RWPE1 (cell line): ENCODE measurements at regions of chr2 and their contacts with region 1.

Region 1: GRCh38 chr2:238370823-238371372 is 50.6 kb downstream of the TRAF3IP1 start:
- DNase-seq: peak; percentile 75
- H3K27ac ChIP-seq: no peak overlapping the region
- CTCF ChIP-seq: peak; percentile 78

Region 2: DNA sequence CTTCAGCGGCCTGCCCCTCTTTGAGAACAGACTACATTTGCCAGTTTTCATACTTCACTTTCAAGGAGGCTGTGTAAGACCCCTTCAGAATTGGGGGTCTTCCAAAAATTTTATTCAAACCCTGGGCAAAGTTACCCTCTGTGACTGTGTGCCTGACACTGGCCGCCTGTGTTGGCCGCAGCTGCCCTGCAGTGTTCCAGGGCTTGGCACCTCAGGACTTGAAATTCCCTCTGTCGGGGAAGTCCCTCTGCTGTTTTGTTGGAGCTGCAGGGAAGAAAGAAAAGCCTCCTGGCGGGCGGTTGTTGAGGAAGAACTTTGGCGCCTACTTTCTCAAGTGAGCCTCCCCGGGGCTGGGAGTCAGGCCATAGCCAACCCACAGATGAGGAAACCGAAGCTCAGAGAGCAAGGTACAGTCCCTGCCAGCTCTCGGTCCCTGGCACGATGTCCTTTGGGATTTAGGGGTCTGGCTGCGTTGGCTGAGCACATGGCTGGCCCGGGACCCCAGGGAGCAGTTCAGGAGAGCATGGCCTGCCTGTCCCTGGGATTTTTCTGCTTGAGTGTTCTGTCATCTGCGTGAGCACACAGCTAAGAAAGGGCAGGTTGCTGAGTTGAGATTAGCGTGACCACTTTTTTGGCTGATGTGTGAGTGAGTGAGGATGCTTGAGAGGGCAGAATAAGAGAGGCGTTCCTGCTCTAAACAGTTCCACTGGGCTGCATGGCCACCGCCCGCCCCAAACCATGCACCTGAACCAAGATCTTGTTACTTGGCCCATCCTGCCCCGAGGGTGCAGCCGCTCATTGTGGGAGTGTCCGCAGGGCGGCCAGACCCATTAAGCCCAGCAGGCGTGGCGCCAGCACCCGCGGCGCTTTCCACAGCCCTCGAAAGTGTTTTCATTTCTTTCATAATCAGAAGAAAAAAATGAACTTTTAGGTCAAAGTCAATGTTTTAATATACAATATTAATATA is 38.0 kb after region 1 on chr2:
- CTCF ChIA-PET with region 1: no interaction called
- POLR2A ChIA-PET with region 1: no interaction called
- DNase-seq: no peak
- H3K27ac ChIP-seq: no peak overlapping the region
- CTCF ChIP-seq: no peak

Region 3: DNA sequence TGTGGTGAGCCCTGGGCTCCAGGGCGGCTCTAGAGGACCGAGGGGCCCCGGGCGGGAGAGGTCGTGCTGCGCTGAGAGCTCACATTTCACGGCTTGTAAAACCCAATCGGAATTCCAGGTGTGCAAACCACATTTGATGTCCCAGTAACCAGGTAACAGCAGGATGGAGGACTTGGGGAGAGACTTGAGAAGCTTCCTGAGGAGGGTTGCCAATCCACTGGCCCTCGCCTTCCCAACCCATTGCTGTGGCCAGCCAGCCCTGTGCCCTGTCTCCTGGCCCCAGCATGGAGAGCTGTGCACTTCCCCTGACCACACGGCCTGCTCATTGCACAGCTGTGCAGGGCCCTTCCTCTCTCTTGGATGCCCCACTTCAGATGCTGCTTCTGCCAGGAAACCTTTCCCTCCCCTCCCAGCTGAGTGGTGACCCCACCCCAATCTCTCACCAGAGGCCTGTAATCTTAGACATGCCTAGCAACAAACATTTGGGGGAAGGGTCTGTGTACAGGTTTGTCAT is 95.4 kb after region 1 on chr2:
- CTCF ChIA-PET with region 1: interaction called, 10 read pairs
- POLR2A ChIA-PET with region 1: no interaction called
- DNase-seq: no peak
- H3K27ac ChIP-seq: no peak overlapping the region
- CTCF ChIP-seq: no peak

Region 4: DNA sequence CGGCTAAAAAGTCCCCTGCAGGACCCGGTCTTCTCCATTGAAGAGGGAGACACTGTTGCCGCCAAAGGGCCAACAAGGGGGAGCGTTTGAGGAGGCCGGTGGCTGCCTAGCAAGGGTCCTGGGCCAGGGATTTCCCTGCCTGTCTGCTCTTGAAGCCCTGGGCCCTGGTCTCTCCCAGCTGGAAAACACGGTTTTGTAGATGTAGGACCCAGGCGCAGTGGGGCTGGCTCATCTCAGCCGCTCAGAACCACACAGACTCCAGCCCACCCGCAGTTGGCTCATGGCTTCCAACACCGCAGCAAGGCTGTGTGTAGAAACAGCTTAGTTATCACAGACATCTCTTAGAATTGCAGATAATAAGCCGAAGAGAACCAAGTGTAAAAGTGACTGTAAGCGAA is 419.9 kb after region 1 on chr2:
- CTCF ChIA-PET with region 1: no interaction called
- POLR2A ChIA-PET with region 1: no interaction called
- DNase-seq: no peak
- H3K27ac ChIP-seq: no peak overlapping the region
- CTCF ChIP-seq: no peak